ENCODE measurements at regions of chr9 and their contacts with region 1.

Region 1: DNA sequence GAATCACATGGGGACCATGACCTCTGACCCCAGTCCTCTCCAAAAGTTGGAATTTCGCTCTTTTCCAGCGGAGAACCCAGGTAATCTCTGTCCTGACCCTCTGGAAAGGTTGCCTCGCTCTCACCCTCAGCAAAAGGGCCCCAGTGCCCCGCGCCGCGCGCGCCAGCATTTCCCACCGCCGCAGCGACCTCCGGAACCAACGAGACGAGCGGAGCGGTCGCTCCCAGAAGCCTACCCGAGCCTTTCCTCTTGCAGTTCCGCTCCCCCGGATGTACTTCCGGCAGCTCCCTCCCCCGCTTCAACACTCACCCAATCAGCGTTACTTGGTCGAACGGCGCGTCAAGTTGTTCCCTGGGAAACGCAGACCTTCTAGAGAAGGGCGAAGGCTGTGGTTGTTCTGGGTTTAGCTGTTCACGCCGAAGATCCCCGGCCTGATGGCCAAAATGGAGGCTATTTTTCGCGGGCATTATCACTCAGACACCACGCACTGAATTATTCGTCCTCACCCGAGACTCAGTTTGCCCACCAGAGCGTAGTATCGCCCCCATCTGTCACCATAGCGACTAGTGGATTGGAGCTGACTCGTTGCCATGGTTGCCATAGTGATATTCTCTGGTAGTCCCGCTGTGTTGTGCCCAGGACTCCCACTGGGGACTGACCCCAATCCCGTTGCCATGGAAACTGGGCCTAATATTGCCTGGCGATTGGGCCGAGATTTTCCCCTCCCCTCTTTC is at the start of gene STOML2:
- DNase-seq: peak; percentile 97 to 98
- ATAC-seq: peak; percentile 97 to 98
- H3K4me3 ChIP-seq: peak within 1 kb of the TSS; percentile 70
- H3K27ac ChIP-seq: peak within 1 kb of the TSS; percentile 88 to 91
- H3K4me1 ChIP-seq: peaks cover 14% of the 10 kb centered on the region
- CTCF ChIP-seq: no peak
- EP300 ChIP-seq: no peak
- POLR2A ChIP-seq: peak; percentile 66
- RAD21 ChIP-seq: no peak
- polyA plus RNA-seq, gene STOML2: 196 and 230 TPM in 2 replicates

Region 2: GRCh38 chr9:35079426-35080341 is 23.4 kb before region 1 on chr9 and contains the start of gene FANCG:
- CTCF ChIA-PET with region 1: interaction called, 99 read pairs
- POLR2A ChIA-PET with region 1: interaction called, 24 read pairs
- DNase-seq: peak; percentile 94 to 95
- ATAC-seq: peak; percentile 96
- H3K4me3 ChIP-seq: peak within 1 kb of the TSS; percentile 71
- H3K27ac ChIP-seq: peak within 1 kb of the TSS; percentile 86 to 96
- H3K4me1 ChIP-seq: peaks cover 14% of the 10 kb centered on the region; the same call in 2 of the 3 replicates
- CTCF ChIP-seq: no peak
- EP300 ChIP-seq: no peak
- POLR2A ChIP-seq: peak; percentile 88
- RAD21 ChIP-seq: no peak
- polyA plus RNA-seq, gene FANCG: 34.9 and 39.7 TPM in 2 replicates

Region 3: GRCh38 chr9:35164711-35165110 is 61.6 kb after region 1 on chr9:
- CTCF ChIA-PET with region 1: no interaction called
- POLR2A ChIA-PET with region 1: no interaction called
- DNase-seq: no peak
- ATAC-seq: no peak
- H3K4me3 ChIP-seq: no peak overlapping the region
- H3K27ac ChIP-seq: no peak overlapping the region
- H3K4me1 ChIP-seq: peaks cover 8% of the 10 kb centered on the region; the same call in 2 of the 3 replicates
- CTCF ChIP-seq: no peak
- EP300 ChIP-seq: no peak
- POLR2A ChIP-seq: no peak
- RAD21 ChIP-seq: no peak

Region 4: GRCh38 chr9:36053971-36054370 is 950.9 kb after region 1 on chr9:
- CTCF ChIA-PET with region 1: no interaction called
- POLR2A ChIA-PET with region 1: no interaction called
- DNase-seq: peak in 1 of 2 experiments; percentile 4
- ATAC-seq: peak; percentile 30 to 50; a peak in 3 of 6 replicates
- H3K4me3 ChIP-seq: no peak overlapping the region
- H3K27ac ChIP-seq: 0 out of 6 replicates have a peak overlapping the region, but pooled peaks of 1 of the 2 experiments have one; percentile 11
- H3K4me1 ChIP-seq: peaks cover 11% of the 10 kb centered on the region
- CTCF ChIP-seq: no peak
- EP300 ChIP-seq: no peak
- POLR2A ChIP-seq: no peak
- RAD21 ChIP-seq: no peak

Region 5: GRCh38 chr9:36612946-36613345 is 1509.9 kb after region 1 on chr9:
- CTCF ChIA-PET with region 1: no interaction called
- POLR2A ChIA-PET with region 1: no interaction called
- DNase-seq: no peak
- ATAC-seq: no peak
- H3K4me3 ChIP-seq: no peak overlapping the region
- H3K27ac ChIP-seq: no peak overlapping the region
- H3K4me1 ChIP-seq: no peaks in the 10 kb centered on the region
- CTCF ChIP-seq: no peak
- EP300 ChIP-seq: no peak
- POLR2A ChIP-seq: no peak
- RAD21 ChIP-seq: no peak